GM12878 (cell line): ENCODE measurements at regions of chr11 and their contacts with region 1.

Region 1: GRCh38 chr11:33033493-33033892 is 5.9 kb upstream of the TCP11L1 start:
- DNase-seq: no peak
- ATAC-seq: no peak
- H3K4me3 ChIP-seq: no peak overlapping the region
- H3K27ac ChIP-seq: no peak overlapping the region
- H3K4me1 ChIP-seq: no peaks in the 10 kb centered on the region
- H3K27me3 ChIP-seq: no peaks in the 10 kb centered on the region; a peak in 1 of 4 replicates
- CTCF ChIP-seq: no peak
- EP300 ChIP-seq: no peak
- POLR2A ChIP-seq: no peak
- RAD21 ChIP-seq: no peak

Region 2: DNA sequence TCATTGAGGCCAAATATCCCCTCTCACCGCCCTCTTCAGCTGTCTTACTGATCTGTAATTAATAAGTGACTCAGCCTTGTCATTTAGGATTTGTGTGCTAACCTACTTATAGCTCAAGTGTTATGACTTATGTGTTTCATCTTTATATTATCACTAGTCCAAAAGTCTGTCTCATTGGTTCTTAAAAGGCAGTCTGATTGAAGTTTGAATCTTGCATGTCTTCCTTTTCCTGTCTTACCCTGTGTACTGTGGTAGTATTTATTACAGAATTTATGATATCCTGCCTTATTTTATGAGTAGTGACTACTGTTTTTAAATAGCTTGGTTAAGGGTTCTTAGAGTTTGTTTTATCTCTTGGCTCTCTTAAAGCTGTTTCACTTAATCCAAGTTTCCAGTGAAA is 11.6 kb before region 1 on chr11:
- CTCF ChIA-PET with region 1: interaction called, 14 read pairs
- POLR2A ChIA-PET with region 1: interaction called, 9 read pairs
- RAD21 ChIA-PET with region 1: interaction called, 8 read pairs
- SMC1A ChIA-PET with region 1: interaction called, 18 read pairs
- in situ Hi-C with region 1: no loop called
- intact Hi-C with region 1: no loop called
- DNase-seq: no peak
- ATAC-seq: peak; percentile 64
- H3K4me3 ChIP-seq: no peak overlapping the region
- H3K27ac ChIP-seq: no peak overlapping the region
- H3K4me1 ChIP-seq: no peaks in the 10 kb centered on the region
- H3K27me3 ChIP-seq: no peaks in the 10 kb centered on the region; a peak in 1 of 4 replicates
- CTCF ChIP-seq: no peak
- EP300 ChIP-seq: no peak
- POLR2A ChIP-seq: no peak
- RAD21 ChIP-seq: no peak